Posterior vena cava (tissue), 2 donors: ENCODE measurements at regions of chr4 and their contacts with region 1.

Region 1: GRCh38 chr4:28654618-28655017 is 1794.0 kb downstream of the STIM2 start:
- DNase-seq: no peak

Region 2: DNA sequence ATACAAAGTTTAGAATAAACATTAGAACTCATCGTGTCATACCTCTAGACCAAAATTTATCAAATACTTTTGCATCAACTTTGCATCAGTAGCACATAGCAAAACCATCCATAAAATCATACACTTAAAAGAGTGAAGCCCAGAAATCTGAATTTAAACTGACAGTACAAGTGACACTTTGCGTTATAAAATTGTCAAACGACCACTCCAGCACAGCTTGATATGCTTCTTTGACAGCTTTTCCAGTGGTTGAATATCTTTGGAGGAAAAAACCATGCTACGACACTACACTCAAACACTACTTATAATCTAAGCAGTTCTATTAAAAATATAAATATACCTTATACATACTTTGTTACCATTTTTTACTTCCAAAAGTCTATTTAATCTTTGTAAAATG is 149.6 kb before region 1 on chr4:
- intact Hi-C with region 1: loop called in 1 of 2 experiments (anchors 2 kb)
- DNase-seq: no peak

Region 3: DNA sequence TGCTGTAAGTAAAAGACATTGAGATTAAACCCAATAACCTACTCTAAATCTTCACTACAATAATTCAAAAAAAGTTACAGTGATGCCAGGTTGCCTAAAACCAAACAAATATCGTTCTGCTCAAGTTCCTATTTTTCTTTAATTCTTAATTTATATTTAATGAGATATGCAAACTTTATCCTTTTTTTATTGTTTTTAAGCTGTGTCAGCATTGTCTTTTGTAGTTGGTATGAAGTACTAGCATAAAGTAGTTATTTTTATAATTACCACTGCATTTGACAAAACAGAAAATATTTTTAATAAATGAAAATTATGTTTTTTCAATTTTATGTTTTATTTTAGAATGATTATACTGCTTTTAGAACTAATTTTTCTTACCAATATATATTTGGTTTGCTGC is 634.5 kb after region 1 on chr4:
- intact Hi-C with region 1: loop called in 1 of 2 experiments (anchors 5 kb)
- DNase-seq: no peak